ENCODE measurements at regions of chr11 and their contacts with region 1.

Region 1: DNA sequence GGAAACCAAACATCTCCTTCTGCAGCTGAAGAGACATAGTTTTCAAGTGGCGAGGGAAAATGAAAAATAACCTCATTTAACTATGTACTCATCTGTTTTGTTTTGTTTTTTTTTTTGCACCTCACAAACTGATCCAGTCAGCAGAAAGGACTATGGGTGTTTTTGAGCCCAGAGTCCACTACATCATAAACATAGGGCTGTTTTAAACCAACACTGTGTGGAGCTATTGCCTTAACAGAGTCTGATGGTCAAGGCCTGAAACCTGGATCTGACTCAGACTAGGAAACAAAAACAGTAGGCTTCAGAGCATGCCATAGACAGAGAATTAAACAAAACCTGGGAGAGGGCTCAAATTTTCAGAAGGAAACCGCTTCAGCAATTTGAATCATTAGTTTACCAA is 99.3 kb upstream of the FSHB start:
- DNase-seq: no peak
- H3K4me3 ChIP-seq: no peak overlapping the region
- H3K27ac ChIP-seq: no peak overlapping the region
- H3K4me1 ChIP-seq: no peaks in the 10 kb centered on the region
- H3K27me3 ChIP-seq: no peaks in the 10 kb centered on the region
- CTCF ChIP-seq: no peak
- POLR2A ChIP-seq: no peak

Region 2: GRCh38 chr11:28826807-28827206 is 1304.7 kb before region 1 on chr11:
- intact Hi-C with region 1: loop called (anchors 5 kb)
- DNase-seq: no peak
- H3K4me3 ChIP-seq: no peak overlapping the region
- H3K27ac ChIP-seq: no peak overlapping the region
- H3K4me1 ChIP-seq: no peaks in the 10 kb centered on the region
- H3K27me3 ChIP-seq: no peaks in the 10 kb centered on the region
- CTCF ChIP-seq: no peak
- POLR2A ChIP-seq: no peak

Region 3: DNA sequence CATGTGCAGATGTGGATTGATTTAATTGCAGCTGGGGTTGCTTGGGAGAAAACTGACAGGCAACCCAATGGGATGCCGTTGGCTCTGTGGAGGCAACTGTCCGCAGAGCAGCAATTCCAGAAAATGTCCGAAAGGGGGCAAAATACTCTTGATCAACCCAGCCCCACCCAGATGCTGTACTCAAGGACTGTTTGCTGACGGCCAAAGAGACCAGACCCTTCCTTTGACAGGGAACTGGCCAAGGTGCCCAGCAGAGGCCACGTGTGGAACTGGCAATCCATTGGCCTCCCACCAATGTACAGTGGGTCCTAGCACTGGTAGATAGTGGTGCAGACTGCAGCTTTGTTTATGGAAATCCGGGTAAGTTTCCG is 85.0 kb before region 1 on chr11:
- intact Hi-C with region 1: no loop called
- DNase-seq: no peak
- H3K4me3 ChIP-seq: no peak overlapping the region
- H3K27ac ChIP-seq: no peak overlapping the region
- H3K4me1 ChIP-seq: no peaks in the 10 kb centered on the region
- H3K27me3 ChIP-seq: no peaks in the 10 kb centered on the region
- CTCF ChIP-seq: no peak
- POLR2A ChIP-seq: no peak

Region 4: GRCh38 chr11:30365793-30366517 is 234.4 kb after region 1 on chr11:
- intact Hi-C with region 1: loop called (anchors 5 kb)
- DNase-seq: no peak
- H3K4me3 ChIP-seq: no peak overlapping the region
- H3K27ac ChIP-seq: no peak overlapping the region
- H3K4me1 ChIP-seq: no peaks in the 10 kb centered on the region
- H3K27me3 ChIP-seq: no peaks in the 10 kb centered on the region
- CTCF ChIP-seq: no peak
- POLR2A ChIP-seq: no peak

Measured in breast epithelium (tissue), 4 donors.